ENCODE measurements at regions of chr7 and their contacts with region 1.

Region 1: DNA sequence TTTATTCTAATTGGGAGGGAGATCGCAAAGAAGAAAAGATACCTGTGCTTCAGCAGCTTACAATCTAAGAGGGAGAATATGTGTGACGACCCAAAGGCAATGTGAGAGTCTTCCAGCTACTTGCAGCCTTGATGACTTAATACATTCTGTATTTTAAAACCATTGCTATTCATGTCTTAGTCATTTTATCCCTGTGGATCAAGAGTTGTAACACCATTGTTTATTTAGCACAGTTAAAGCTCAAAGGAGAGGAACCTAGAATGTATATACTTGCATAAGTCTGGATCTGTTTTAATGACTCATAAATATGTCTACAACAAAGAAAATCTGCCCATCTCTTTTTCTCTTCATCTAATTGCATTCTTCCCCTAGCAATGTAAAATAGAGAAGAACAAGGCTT is 117.9 kb upstream of the DLX6 start:
- DNase-seq: no peak
- H3K4me3 ChIP-seq: no peak overlapping the region
- CTCF ChIP-seq: no peak

Region 2: DNA sequence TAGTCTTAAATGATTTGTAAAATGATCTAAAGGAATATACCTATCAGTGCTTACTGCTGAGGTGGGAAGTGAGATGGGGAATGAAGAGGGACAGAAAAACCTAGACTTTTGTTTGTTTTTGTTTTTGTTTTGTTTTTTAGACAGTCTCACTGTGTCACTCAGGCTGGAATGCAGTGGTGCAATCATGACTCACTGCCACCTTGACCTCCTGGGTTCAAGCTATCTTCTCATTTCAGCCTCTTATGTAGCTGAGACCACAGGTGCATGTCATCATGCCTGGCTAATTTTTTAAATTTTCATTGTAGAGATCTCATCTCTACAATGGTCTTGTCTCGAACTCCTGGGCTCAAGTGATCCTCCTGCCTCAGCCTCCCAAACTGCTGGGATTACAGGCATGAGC is 61.3 kb before region 1 on chr7:
- in situ Hi-C with region 1: loop called (anchors 5 kb)
- DNase-seq: no peak
- H3K4me3 ChIP-seq: no peak overlapping the region
- CTCF ChIP-seq: no peak

Region 3: GRCh38 chr7:96936621-96937020 is 49.2 kb after region 1 on chr7:
- in situ Hi-C with region 1: no loop called
- DNase-seq: no peak
- H3K4me3 ChIP-seq: no peak overlapping the region
- CTCF ChIP-seq: no peak

Region 4: GRCh38 chr7:96949766-96950165 is 62.3 kb after region 1 on chr7:
- in situ Hi-C with region 1: loop called (anchors 5 kb)
- DNase-seq: peak; percentile 75
- H3K4me3 ChIP-seq: no peak overlapping the region
- CTCF ChIP-seq: peak; percentile 8

Region 5: GRCh38 chr7:97446361-97446760 is 558.9 kb after region 1 on chr7:
- in situ Hi-C with region 1: no loop called
- DNase-seq: no peak
- H3K4me3 ChIP-seq: no peak overlapping the region
- CTCF ChIP-seq: no peak

Measured in astrocyte of the cerebellum (primary cell).